ENCODE measurements at regions of chr20 and their contacts with region 1.

Region 1: GRCh38 chr20:32316667-32317066 is 39.2 kb downstream of the KIF3B start:
- DNase-seq: no peak
- ATAC-seq: 0 out of 2 replicates have a peak, but pooled peaks have one; percentile 18
- H3K4me3 ChIP-seq: no peak overlapping the region
- H3K27ac ChIP-seq: no peak overlapping the region
- H3K4me1 ChIP-seq: no peaks in the 10 kb centered on the region
- H3K27me3 ChIP-seq: no peaks in the 10 kb centered on the region
- CTCF ChIP-seq: no peak

Region 2: GRCh38 chr20:32098786-32099185 is 217.9 kb before region 1 on chr20:
- CTCF ChIA-PET with region 1: no interaction called
- POLR2A ChIA-PET with region 1: interaction called, 11 read pairs
- in situ Hi-C with region 1: no loop called
- intact Hi-C with region 1: no loop called
- DNase-seq: no peak
- ATAC-seq: no peak
- H3K4me3 ChIP-seq: no peak overlapping the region
- H3K27ac ChIP-seq: no peak overlapping the region
- H3K4me1 ChIP-seq: no peaks in the 10 kb centered on the region
- H3K27me3 ChIP-seq: peaks cover 6% of the 10 kb centered on the region; the same call in 1 of the 2 replicates
- CTCF ChIP-seq: no peak

Region 3: DNA sequence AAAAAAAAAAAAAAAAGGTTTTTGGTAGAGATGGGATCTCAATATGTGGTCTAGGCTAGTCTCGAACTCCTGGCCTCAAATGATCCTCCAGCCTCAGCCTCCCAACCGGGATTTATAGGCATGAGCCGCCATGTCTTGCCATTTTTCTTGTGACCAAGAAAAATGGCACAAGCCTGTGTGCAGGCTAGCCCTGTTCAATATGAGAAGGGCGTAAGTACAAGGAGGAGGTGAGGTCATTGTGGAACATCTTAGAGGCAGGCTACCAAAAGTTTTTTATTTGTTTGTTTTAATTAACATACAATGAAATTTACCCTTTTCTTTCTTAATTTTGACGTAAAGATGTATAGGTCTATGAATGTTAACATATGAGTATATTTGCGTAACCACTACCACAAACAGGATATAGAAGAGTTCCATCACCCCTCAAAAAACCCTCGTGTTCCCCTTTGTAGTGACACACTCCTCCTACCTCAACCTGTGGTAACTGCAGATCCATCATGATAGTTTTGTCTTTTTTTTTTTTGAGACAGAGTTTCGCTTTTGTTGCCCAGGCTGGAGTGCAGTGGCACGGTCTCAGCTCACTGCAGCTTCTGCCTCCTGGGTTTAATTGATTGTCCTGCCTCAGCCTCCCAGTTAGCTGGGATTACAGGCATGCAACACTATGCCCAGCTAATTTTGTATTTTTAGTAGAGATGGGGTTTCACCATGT is 67.5 kb before region 1 on chr20:
- CTCF ChIA-PET with region 1: no interaction called
- POLR2A ChIA-PET with region 1: no interaction called
- in situ Hi-C with region 1: no loop called
- intact Hi-C with region 1: loop called (anchors 10 kb)
- DNase-seq: no peak
- ATAC-seq: no peak
- H3K4me3 ChIP-seq: no peak overlapping the region
- H3K27ac ChIP-seq: no peak overlapping the region
- H3K4me1 ChIP-seq: peaks cover 9% of the 10 kb centered on the region
- H3K27me3 ChIP-seq: no peaks in the 10 kb centered on the region
- CTCF ChIP-seq: no peak

Region 4: DNA sequence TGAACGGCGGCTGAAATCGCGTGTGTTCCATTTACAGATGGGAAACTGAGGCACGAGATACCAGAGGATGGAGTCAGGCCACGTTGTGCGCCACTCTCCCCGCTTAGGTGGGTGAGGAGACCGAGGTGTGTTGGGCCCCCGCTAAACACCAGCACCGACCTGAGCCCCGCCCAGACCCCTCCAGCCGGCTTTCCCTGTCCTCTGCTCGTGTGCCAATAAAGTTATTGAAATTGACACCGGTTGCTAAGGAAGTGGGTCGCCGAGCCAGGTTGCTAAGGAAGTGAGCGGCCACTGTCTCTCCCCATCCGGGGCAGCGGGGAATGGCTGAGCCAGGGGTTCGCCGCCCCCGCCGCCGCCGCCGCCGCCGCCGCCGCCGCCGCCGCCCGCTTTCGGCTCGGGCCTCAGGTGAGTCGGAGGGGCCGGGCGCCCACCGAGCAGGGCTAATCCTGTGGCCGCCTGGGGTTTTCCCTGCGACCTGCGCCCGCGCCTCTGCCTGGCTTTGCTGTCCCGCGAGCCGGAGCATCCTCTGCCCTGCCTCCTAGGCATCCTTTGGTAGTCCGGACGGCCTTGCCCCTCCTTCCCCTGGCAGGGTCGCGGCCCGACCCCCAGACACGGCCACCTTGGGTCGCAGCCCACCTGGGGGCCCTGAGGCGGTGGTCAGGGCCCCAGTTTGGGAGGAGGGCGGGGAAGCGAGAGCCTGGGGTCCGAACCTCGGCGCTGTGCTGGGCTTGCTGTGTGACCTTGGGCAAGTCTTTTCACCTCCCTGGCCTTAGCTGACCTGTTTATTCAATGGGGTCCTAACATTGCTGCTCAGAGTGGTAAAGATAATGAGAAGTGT is 39.1 kb before region 1 on chr20 and contains the start of gene KIF3B:
- CTCF ChIA-PET with region 1: no interaction called
- POLR2A ChIA-PET with region 1: no interaction called
- in situ Hi-C with region 1: loop called (anchors 5 kb)
- intact Hi-C with region 1: no loop called
- DNase-seq: peak; percentile 83
- ATAC-seq: peak; percentile 99
- H3K4me3 ChIP-seq: peak within 1 kb of the TSS; percentile 72 to 91
- H3K27ac ChIP-seq: peak within 1 kb of the TSS; percentile 92
- H3K4me1 ChIP-seq: peaks cover 17% of the 10 kb centered on the region
- H3K27me3 ChIP-seq: no peaks in the 10 kb centered on the region
- CTCF ChIP-seq: no peak
- total RNA-seq, gene KIF3B: 67.8 TPM

Region 5: GRCh38 chr20:32387252-32387651 is 70.6 kb after region 1 on chr20:
- CTCF ChIA-PET with region 1: no interaction called
- POLR2A ChIA-PET with region 1: no interaction called
- in situ Hi-C with region 1: no loop called
- intact Hi-C with region 1: no loop called
- DNase-seq: no peak
- ATAC-seq: no peak
- H3K4me3 ChIP-seq: no peak overlapping the region
- H3K27ac ChIP-seq: no peak overlapping the region
- H3K4me1 ChIP-seq: peaks cover 14% of the 10 kb centered on the region
- H3K27me3 ChIP-seq: no peaks in the 10 kb centered on the region
- CTCF ChIP-seq: no peak

Measured in Panc1 (cell line).